Right cardiac atrium (tissue), 5 donors: ENCODE measurements at regions of chr6 and their contacts with region 1.

Region 1: DNA sequence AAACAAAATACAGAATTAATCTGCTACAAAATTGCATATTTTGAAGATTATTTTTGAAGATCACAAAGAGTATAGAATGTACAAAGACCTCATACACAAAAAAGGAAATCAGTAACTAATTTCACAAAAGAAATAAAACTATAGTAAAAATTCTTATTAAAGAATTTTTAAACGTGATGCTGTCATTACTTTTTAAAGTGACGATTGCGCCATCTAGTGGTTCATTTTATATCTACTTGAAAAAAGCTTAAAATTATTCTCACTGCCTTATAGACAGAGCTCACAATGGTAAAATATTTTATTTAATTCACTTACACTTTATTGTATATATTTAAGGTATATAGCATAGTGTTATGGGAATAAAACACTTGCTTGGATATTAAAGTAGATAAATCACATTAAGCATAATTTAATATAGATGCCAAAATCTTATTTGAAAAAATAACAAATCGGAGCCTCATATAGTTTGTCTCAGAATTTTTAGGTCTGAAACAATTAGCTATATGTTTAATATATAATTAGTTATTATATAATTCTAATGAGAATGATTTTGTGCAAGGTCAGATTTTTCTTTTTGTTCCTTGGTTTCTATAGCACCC is 128.8 kb downstream of the PHF3 start:
- DNase-seq: no peak
- ATAC-seq: no peak
- H3K4me3 ChIP-seq: no peak overlapping the region
- H3K27ac ChIP-seq: no peak overlapping the region
- H3K4me1 ChIP-seq: no peaks in the 10 kb centered on the region
- H3K27me3 ChIP-seq: no peaks in the 10 kb centered on the region

Region 2: GRCh38 chr6:63347599-63347998 is 416.8 kb before region 1 on chr6:
- intact Hi-C with region 1: loop called in 3 of 4 experiments (anchors 5 to 10 kb)
- DNase-seq: no peak
- ATAC-seq: no peak
- H3K4me3 ChIP-seq: no peak overlapping the region
- H3K27ac ChIP-seq: no peak overlapping the region
- H3K4me1 ChIP-seq: no peaks in the 10 kb centered on the region
- H3K27me3 ChIP-seq: no peaks in the 10 kb centered on the region

Region 3: DNA sequence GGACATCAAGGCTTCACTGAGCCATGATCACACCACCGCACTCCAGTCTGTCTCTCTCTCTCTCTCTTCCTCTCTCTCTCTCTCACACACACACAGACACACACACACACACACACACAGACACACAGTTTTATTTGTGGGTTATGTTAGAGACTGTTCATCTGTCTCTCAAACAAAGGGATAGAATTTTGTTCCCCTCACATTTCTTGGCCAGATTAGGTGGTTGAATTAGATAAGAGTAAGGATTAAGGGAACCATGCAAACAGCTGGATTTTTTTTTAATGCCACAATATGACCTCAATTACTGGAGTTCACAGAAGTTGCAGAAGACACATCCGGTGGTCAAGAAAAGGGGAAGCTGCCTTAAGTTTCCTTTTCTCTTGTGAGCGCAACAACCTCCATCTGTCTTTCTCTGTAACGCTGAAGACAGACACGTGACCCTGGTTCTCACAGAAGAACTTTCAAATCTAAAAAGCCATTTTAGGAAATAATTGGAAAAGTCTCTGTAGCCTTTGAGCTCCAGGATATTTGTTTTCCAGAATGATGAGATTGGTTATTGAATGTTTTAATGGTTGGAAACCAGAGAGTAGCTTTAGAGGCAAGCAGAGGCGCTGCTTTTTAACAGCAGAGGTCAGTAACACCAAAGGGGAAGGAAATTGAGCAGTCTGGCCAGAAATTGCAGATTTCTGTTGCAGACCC is 411.7 kb before region 1 on chr6:
- intact Hi-C with region 1: loop called in 3 of 4 experiments (anchors 5 to 10 kb)
- DNase-seq: no peak
- ATAC-seq: peak; percentile 62 to 76
- H3K4me3 ChIP-seq: no peak overlapping the region
- H3K27ac ChIP-seq: no peak overlapping the region
- H3K4me1 ChIP-seq: no peaks in the 10 kb centered on the region
- H3K27me3 ChIP-seq: no peaks in the 10 kb centered on the region

Region 4: GRCh38 chr6:63598049-63599036 is 166.1 kb before region 1 on chr6:
- intact Hi-C with region 1: loop called in 3 of 4 experiments (anchors 5 kb)
- DNase-seq: peak; percentile 42 to 80 (median 73)
- ATAC-seq: peak; percentile 96 to 97
- H3K4me3 ChIP-seq: peak overlapping the region; percentile 72
- H3K27ac ChIP-seq: no peak overlapping the region
- H3K4me1 ChIP-seq: no peaks in the 10 kb centered on the region
- H3K27me3 ChIP-seq: no peaks in the 10 kb centered on the region